Activated T-helper 1 cell treated with anti-CD3 and anti-CD28 coated beads, Interleukin-12 subunit alpha, Interleukin-12 subunit beta, Interleukin-2, Interleukin-4 antibody, amounts not matched to agents 30 ng/mL and 10 ng/mL and 1 ng/mL, durations not matched to agents 14 hours and 24 hours and 36 hours (primary cell): ENCODE measurements at regions of chr11 and their contacts with region 1.

Region 1: DNA sequence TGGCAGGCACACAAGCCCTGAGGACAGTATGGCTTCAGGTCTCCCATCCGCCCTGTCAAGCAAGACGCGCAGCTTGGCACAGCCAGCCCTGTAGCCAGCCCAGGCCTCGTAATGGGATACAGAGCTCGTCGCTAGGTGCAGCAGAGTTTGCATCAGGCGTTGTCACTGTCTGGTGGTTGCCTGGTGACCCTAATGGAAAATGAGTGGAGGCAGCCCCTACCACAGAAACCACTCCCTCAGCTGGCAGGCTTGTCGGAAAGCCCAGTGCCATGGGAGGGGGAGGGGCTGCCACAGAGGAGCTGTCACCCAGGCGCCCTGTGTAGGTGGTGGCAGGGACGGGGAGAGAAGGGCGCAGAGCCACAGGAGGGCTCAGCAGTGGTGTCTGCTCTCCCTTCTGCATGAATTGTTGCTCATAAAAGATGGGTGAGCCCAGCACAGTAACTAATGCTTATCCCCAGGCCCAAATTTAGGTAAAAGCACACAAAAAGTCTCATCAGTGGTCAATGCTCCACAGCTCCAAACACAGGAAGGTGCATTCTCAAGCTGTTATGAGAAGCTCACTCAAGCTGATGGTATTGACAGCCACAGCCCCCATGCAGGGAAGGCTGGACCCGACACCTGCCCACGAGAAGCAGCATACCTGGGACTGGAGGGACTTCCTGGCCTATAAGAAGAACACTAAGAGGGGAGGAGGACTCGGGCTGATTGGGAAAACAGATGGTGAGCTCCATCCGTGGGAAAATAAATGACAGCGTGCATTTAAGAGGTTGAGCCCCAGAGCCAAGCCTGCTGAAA is 164.6 kb downstream of the ETS1 start:
- DNase-seq: peak; percentile 64
- H3K4me3 Mint-ChIP-seq: peak overlapping the region; percentile 69
- H3K27ac Mint-ChIP-seq: peak overlapping the region; percentile 92
- H3K4me1 Mint-ChIP-seq: peaks cover 38% of the 10 kb centered on the region
- H3K27me3 Mint-ChIP-seq: no peaks in the 10 kb centered on the region

Region 2: GRCh38 chr11:128302425-128303186 is 120.2 kb before region 1 on chr11:
- intact Hi-C with region 1: loop called (anchors 1 kb)
- DNase-seq: peak; percentile 79
- H3K4me3 Mint-ChIP-seq: peak overlapping the region; percentile 91
- H3K27ac Mint-ChIP-seq: peak overlapping the region; percentile 97
- H3K4me1 Mint-ChIP-seq: peaks cover 85% of the 10 kb centered on the region
- H3K27me3 Mint-ChIP-seq: no peaks in the 10 kb centered on the region

Region 3: GRCh38 chr11:128316541-128317227 is 106.1 kb before region 1 on chr11:
- intact Hi-C with region 1: no loop called
- DNase-seq: no peak
- H3K4me3 Mint-ChIP-seq: peak overlapping the region; percentile 20
- H3K27ac Mint-ChIP-seq: peak overlapping the region; percentile 69
- H3K4me1 Mint-ChIP-seq: peaks cover 61% of the 10 kb centered on the region
- H3K27me3 Mint-ChIP-seq: no peaks in the 10 kb centered on the region

Region 4: DNA sequence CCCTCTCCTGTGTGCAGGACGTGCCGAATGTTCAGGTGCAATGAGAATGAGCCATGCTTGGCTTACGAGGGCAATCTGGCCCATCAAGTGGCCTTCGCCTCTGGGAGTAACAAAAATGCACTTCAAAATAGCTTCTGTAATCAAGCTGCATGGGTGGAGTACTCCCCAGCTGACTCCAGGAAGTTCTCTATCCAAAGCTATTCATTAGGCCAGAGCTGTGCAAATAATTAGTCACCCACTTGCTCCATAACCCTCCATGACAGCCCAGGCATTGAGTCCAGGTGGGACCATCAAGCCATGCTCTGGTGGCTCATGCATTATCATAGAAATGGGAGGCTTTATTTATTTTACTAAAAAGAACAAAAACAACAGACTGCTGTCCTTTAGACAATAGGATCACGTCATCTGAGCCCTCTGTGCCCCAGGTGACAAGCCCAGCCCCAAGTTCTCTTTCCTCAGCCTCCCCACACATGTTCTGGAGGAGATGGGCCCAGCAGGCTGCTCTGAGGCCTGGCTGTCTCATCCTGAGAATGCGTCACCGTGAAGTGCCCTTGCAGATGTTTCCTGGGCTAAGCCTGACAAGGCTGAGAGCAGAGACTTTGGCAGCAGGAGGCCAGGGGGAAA is 80.2 kb before region 1 on chr11:
- intact Hi-C with region 1: loop called (anchors 1 kb)
- DNase-seq: peak; percentile 70
- H3K4me3 Mint-ChIP-seq: peak overlapping the region; percentile 76
- H3K27ac Mint-ChIP-seq: peak overlapping the region; percentile 85
- H3K4me1 Mint-ChIP-seq: peaks cover 92% of the 10 kb centered on the region
- H3K27me3 Mint-ChIP-seq: no peaks in the 10 kb centered on the region

Region 5: GRCh38 chr11:128372977-128373376 is 49.8 kb before region 1 on chr11:
- intact Hi-C with region 1: no loop called
- DNase-seq: no peak
- H3K4me3 Mint-ChIP-seq: no peak overlapping the region
- H3K27ac Mint-ChIP-seq: no peak overlapping the region
- H3K4me1 Mint-ChIP-seq: peaks cover 20% of the 10 kb centered on the region
- H3K27me3 Mint-ChIP-seq: no peaks in the 10 kb centered on the region

Region 6: DNA sequence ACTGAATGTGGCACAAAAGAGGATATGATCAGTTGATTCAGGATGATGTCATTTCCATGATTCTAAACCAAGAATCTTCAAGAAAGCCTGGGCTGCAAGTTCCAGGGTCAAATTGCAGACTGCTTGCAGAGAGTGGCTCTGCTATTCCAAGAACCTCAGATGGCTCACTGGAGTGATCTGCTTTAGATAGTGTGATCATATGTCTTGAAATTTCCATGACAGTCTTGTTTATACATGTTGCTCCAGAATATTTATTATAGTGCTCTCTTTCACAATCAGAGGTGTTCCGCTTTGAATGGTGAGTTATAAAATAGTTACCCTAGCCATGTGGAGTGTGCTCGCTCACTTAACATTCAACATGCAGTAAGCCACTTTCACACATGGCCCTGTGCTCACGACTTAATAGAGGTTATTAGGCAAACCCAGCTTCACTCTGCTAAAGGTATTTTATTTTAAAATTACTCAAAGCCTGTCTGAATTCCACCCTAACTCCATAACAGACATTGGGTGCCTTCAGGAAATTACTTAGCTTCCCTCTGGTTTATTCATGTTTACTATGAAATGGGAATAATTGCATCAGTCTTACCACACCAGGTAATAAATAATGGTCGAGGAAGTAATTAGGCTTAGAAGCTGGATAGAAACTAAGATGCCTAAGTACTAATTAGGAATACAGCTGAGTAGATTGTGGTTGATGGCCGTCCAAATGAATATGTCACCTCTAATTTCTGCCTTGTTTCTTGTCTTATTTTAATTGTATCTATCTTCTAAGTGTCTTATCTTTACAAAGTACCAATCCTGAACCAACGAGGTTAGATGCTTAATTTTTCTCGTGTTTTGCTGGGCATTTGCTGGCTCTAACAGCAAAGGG is 23.3 kb before region 1 on chr11:
- intact Hi-C with region 1: loop called (anchors 2 kb)
- DNase-seq: no peak
- H3K4me3 Mint-ChIP-seq: no peak overlapping the region
- H3K27ac Mint-ChIP-seq: no peak overlapping the region
- H3K4me1 Mint-ChIP-seq: peaks cover 7% of the 10 kb centered on the region
- H3K27me3 Mint-ChIP-seq: no peaks in the 10 kb centered on the region

Region 7: GRCh38 chr11:128448200-128448886 is 25.6 kb after region 1 on chr11:
- intact Hi-C with region 1: loop called (anchors 2 kb)
- DNase-seq: no peak
- H3K4me3 Mint-ChIP-seq: no peak overlapping the region
- H3K27ac Mint-ChIP-seq: peak overlapping the region; percentile 59
- H3K4me1 Mint-ChIP-seq: peaks cover 60% of the 10 kb centered on the region
- H3K27me3 Mint-ChIP-seq: peaks cover 1% of the 10 kb centered on the region